Stomach (tissue), 19 donors: ENCODE measurements at regions of chr2 and their contacts with region 1.

Region 1: GRCh38 chr2:72859831-72860262 is 27.4 kb upstream of the SPR start:
- DNase-seq: peak; percentile 79 to 88
- H3K4me3 ChIP-seq: no peak overlapping the region
- H3K27ac ChIP-seq: no peak overlapping the region
- H3K4me1 ChIP-seq: peaks cover 4 to 13% (median 11%) of the 10 kb centered on the region in 4 donors
- H3K27me3 ChIP-seq: peaks cover 0 to 61% (median 10%) of the 10 kb centered on the region in 3 donors
- CTCF ChIP-seq: peak in 4 of 7 experiments; percentile 32 to 60 (median 48)
- EP300 ChIP-seq: no peak
- POLR2A ChIP-seq: no peak

Region 2: GRCh38 chr2:72759755-72760154 is 100.1 kb before region 1 on chr2:
- intact Hi-C with region 1: no loop called
- DNase-seq: no peak
- H3K4me3 ChIP-seq: no peak overlapping the region
- H3K27ac ChIP-seq: no peak overlapping the region
- H3K4me1 ChIP-seq: peaks cover 10 to 31% (median 24%) of the 10 kb centered on the region in 4 donors
- H3K27me3 ChIP-seq: no peaks in the 10 kb centered on the region
- CTCF ChIP-seq: no peak
- EP300 ChIP-seq: no peak
- POLR2A ChIP-seq: no peak

Region 3: GRCh38 chr2:72770879-72771461 is 88.9 kb before region 1 on chr2:
- intact Hi-C with region 1: loop called (anchors 5 kb)
- DNase-seq: peak; percentile 51 to 88
- H3K4me3 ChIP-seq: no peak overlapping the region
- H3K27ac ChIP-seq: no peak overlapping the region
- H3K4me1 ChIP-seq: peaks cover 0 to 4% (median 0%) of the 10 kb centered on the region in 4 donors
- H3K27me3 ChIP-seq: no peaks in the 10 kb centered on the region
- CTCF ChIP-seq: peak in 5 of 7 experiments; percentile 64 to 82 (median 77)
- EP300 ChIP-seq: no peak
- POLR2A ChIP-seq: no peak